Caco-2 (cell line): ENCODE measurements at regions of chr19 and their contacts with region 1.

Region 1: GRCh38 chr19:48553676-48554386 is 1.9 kb downstream of the SULT2B1 start:
- DNase-seq: peak; percentile 99 to 100
- H3K4me3 ChIP-seq: peak overlapping the region; percentile 24
- H3K4me3 Mint-ChIP-seq: peak overlapping the region; percentile 75
- H3K27ac Mint-ChIP-seq: peak overlapping the region; percentile 98
- H3K4me1 ChIP-seq: peaks cover 63% of the 10 kb centered on the region
- H3K4me1 Mint-ChIP-seq: peaks cover 43% of the 10 kb centered on the region
- H3K27me3 ChIP-seq: no peaks in the 10 kb centered on the region
- H3K27me3 Mint-ChIP-seq: no peaks in the 10 kb centered on the region
- CTCF ChIP-seq: no peak

Region 2: GRCh38 chr19:48391107-48391986 is 162.5 kb before region 1 on chr19 and contains the start of gene KDELR1:
- CTCF ChIA-PET with region 1: no interaction called
- POLR2A ChIA-PET with region 1: interaction called, 10 read pairs
- intact Hi-C with region 1: no loop called
- DNase-seq: peak; percentile 75 to 86
- H3K4me3 ChIP-seq: peak within 1 kb of the TSS; percentile 70
- H3K4me3 Mint-ChIP-seq: peak within 1 kb of the TSS; percentile 80
- H3K27ac Mint-ChIP-seq: peak within 1 kb of the TSS; percentile 61
- H3K4me1 ChIP-seq: peaks cover 27% of the 10 kb centered on the region
- H3K4me1 Mint-ChIP-seq: peaks cover 33% of the 10 kb centered on the region
- H3K27me3 ChIP-seq: no peaks in the 10 kb centered on the region
- H3K27me3 Mint-ChIP-seq: no peaks in the 10 kb centered on the region
- CTCF ChIP-seq: peak; percentile 95 to 98
- total RNA-seq, gene KDELR1: 375 and 381 TPM in 2 replicates

Region 3: GRCh38 chr19:48480558-48481500 is 73.0 kb before region 1 on chr19:
- CTCF ChIA-PET with region 1: no interaction called
- POLR2A ChIA-PET with region 1: no interaction called
- intact Hi-C with region 1: no loop called
- DNase-seq: no peak
- H3K4me3 ChIP-seq: no peak overlapping the region
- H3K4me3 Mint-ChIP-seq: peak overlapping the region; percentile 64
- H3K27ac Mint-ChIP-seq: peak overlapping the region; percentile 38
- H3K4me1 ChIP-seq: no peaks in the 10 kb centered on the region
- H3K4me1 Mint-ChIP-seq: peaks cover 6% of the 10 kb centered on the region
- H3K27me3 ChIP-seq: no peaks in the 10 kb centered on the region
- H3K27me3 Mint-ChIP-seq: no peaks in the 10 kb centered on the region
- CTCF ChIP-seq: no peak

Region 4: DNA sequence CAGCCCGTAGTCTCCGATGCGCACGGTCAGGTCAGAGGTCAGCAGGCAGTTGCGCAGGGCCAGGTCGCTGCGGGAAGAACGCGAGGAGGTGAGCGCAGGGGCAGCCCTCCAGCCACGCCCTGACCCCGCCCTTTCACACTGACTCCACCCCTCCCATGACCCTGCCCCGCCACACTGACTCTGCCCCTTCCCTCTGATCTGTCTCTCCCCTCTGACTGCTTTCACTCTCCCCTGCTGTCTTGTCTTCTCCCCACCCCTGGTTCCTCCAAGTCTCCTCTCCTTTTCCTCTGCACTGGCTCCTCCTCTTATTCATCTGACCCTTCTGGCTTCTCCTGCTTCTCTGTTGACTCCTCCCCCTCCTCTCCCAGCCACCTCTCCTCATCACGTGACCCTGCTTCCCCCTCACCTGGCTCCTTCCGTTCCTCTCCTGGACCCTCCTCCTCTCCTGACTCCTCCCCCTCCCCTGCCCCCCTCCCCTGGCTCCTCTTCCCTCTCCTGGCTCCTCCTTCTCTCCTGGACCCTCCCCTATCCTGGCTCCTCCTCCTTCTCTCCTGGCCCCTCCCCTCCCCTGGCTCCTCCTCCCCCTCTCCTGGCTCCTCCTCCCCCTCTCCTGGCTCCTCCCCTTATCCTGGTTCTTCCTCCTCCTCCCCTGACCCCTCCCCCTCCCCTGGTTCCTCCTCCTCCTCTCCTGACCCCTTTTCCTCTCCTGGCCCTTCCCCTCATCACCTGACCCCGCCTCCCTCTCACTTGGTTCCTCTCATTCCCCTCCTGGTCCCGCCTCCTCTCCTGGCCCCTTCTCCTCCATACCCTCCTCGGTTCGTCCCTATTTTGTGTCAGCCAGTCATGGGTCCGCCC is 52.1 kb before region 1 on chr19:
- CTCF ChIA-PET with region 1: interaction called, 16 read pairs
- POLR2A ChIA-PET with region 1: interaction called, 19 read pairs
- intact Hi-C with region 1: loop called (anchors 1 kb)
- DNase-seq: peak; percentile 99 to 100
- H3K4me3 ChIP-seq: peak overlapping the region; percentile 57
- H3K4me3 Mint-ChIP-seq: peak overlapping the region; percentile 80
- H3K27ac Mint-ChIP-seq: peak overlapping the region; percentile 87
- H3K4me1 ChIP-seq: peaks cover 15% of the 10 kb centered on the region
- H3K4me1 Mint-ChIP-seq: peaks cover 22% of the 10 kb centered on the region
- H3K27me3 ChIP-seq: no peaks in the 10 kb centered on the region
- H3K27me3 Mint-ChIP-seq: no peaks in the 10 kb centered on the region
- CTCF ChIP-seq: no peak

Region 5: DNA sequence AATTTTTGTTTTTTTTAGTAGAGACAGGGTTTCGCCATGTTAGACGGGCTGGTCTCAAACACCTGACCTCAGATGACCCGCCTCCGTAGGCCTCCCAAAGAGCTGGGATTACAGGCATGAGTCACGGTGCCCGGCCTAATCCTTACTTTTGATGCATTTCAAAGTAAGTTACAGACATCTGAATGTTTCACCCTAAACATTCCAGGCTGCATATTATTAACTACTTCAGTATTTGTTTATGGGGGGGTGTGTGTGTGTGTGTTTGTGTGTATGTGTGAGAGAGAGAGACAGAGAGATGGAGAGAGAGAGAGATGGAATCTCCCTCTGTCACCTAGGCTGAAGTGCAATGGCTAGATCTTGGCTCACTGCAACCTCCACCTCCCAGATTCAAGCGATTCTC is 11.3 kb after region 1 on chr19:
- CTCF ChIA-PET with region 1: no interaction called
- POLR2A ChIA-PET with region 1: interaction called, 7 read pairs
- intact Hi-C with region 1: loop called (anchors 1 kb)
- DNase-seq: peak; percentile 86 to 87
- H3K4me3 ChIP-seq: no peak overlapping the region
- H3K4me3 Mint-ChIP-seq: no peak overlapping the region
- H3K27ac Mint-ChIP-seq: peak overlapping the region; percentile 81
- H3K4me1 ChIP-seq: peaks cover 31% of the 10 kb centered on the region
- H3K4me1 Mint-ChIP-seq: peaks cover 21% of the 10 kb centered on the region
- H3K27me3 ChIP-seq: no peaks in the 10 kb centered on the region
- H3K27me3 Mint-ChIP-seq: no peaks in the 10 kb centered on the region
- CTCF ChIP-seq: no peak

Region 6: GRCh38 chr19:48618916-48619691 is 65.3 kb after region 1 on chr19 and contains the starts of genes RPL18 and SPHK2:
- CTCF ChIA-PET with region 1: interaction called, 7 read pairs
- POLR2A ChIA-PET with region 1: interaction called, 15 read pairs
- intact Hi-C with region 1: no loop called
- DNase-seq: peak; percentile 99
- H3K4me3 ChIP-seq: peak within 1 kb of the TSS; percentile 85
- H3K4me3 Mint-ChIP-seq: peak within 1 kb of the TSS; percentile 96
- H3K27ac Mint-ChIP-seq: peak within 1 kb of the TSS; percentile 98
- H3K4me1 ChIP-seq: peaks cover 39% of the 10 kb centered on the region
- H3K4me1 Mint-ChIP-seq: peaks cover 36% of the 10 kb centered on the region
- H3K27me3 ChIP-seq: no peaks in the 10 kb centered on the region
- H3K27me3 Mint-ChIP-seq: no peaks in the 10 kb centered on the region
- CTCF ChIP-seq: no peak
- total RNA-seq, gene RPL18: 1,812 and 1,896 TPM in 2 replicates
- total RNA-seq, gene SPHK2: 134 and 140 TPM in 2 replicates